Left cardiac atrium (tissue), 4 donors: ENCODE measurements at regions of chr3 and their contacts with region 1.

Region 1: GRCh38 chr3:156674046-156674910 is at the start of gene TIPARP:
- DNase-seq: peak; percentile 100
- ATAC-seq: peak; percentile 95 to 96
- total RNA-seq, gene TIPARP: 34.1 to 37.2 TPM

Region 2: GRCh38 chr3:156554842-156555687 is 119.2 kb before region 1 on chr3 and contains the start of gene SSR3:
- intact Hi-C with region 1: loop called (anchors 5 to 10 kb)
- DNase-seq: peak; percentile 100
- ATAC-seq: peak; percentile 100
- total RNA-seq, gene SSR3: 145 to 162 TPM

Region 3: GRCh38 chr3:156615592-156616173 is 58.6 kb before region 1 on chr3:
- intact Hi-C with region 1: loop called in 1 of 2 experiments (anchors 5 kb)
- DNase-seq: no peak
- ATAC-seq: peak; percentile 53 to 89

Region 4: DNA sequence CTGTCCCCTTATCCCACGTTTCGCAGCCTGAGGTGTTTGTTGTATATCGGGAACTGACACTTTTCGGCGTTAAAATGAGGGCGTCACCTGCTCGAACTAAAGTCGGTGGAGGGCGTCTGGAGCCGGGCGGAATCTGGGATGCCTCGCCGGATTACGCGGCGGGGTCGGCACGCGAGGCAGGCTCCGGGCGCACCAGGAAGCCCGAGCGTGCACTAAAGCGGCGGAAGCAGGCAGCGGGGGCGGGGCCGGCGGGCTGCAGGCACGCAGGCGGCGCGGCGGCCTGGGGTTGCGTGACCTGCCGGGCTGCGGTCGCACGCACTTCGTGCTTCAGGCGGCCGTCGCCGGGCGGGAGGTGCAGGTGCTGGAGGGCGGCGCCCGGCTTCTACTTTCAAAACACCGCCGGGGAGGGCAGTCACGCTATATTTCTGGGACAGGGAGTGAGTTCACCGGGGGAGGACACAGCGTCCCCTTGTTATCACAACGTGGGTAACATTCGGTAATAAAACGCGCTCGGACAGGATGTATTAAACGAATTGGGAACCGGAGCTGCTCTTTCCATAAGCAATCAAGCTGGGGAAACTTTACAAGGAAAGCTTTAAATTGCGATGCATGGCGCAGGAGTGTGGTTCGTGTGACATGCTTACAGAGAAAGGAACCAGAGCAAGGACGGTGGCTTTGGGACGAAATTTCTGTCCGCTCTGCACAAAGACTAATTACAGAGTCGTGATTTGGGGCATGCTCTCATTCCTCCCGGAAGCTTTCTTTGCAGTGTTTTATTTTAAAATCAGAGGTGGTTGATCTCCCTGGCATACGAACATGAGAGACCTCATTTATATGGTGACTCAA is 142.7 kb after region 1 on chr3:
- intact Hi-C with region 1: loop called (anchors 5 kb)
- DNase-seq: peak; percentile 90
- ATAC-seq: peak; percentile 95 to 97

Region 5: DNA sequence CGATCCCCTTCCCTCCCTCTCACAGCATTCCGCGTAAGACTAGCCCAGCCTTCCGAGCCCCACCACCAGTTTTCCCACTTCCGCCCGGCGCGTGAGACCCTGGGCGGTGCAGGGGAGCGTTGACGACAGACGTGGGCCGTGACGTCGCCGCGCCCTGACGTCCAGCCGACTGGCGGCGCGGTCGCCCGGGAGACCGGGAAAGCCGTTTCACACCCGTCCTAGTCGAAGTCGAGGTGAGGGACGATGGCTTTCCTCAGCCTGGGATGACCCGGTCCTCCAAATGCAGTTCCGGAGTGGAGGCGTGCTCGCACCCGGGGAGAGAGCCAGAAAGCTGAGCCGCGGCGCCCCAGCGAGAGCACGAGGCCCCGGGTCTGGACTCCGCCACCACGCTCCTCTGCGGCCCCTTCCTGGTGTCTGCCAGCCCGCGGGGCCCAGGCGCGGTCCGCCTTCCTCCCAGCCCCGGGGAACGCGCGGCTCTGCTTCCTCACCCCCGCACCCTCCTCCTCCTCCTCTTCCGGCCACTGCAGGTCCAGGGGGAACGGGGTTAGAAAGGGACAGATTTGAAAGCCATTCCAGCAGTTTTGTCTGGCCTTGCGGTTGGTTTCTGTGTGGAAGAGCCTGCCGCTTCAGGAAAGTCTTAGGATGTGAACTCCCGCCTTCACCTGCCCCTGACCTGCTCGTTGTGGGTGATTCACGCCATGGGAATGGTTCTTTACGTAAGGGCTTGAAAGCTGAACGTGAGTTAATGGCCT is 152.0 kb after region 1 on chr3 and contains the start of gene LEKR1:
- intact Hi-C with region 1: loop called in 1 of 2 experiments (anchors 5 kb)
- DNase-seq: peak; percentile 93
- ATAC-seq: peak; percentile 95 to 96
- total RNA-seq, gene LEKR1: 0.65 to 2.3 TPM

Region 6: DNA sequence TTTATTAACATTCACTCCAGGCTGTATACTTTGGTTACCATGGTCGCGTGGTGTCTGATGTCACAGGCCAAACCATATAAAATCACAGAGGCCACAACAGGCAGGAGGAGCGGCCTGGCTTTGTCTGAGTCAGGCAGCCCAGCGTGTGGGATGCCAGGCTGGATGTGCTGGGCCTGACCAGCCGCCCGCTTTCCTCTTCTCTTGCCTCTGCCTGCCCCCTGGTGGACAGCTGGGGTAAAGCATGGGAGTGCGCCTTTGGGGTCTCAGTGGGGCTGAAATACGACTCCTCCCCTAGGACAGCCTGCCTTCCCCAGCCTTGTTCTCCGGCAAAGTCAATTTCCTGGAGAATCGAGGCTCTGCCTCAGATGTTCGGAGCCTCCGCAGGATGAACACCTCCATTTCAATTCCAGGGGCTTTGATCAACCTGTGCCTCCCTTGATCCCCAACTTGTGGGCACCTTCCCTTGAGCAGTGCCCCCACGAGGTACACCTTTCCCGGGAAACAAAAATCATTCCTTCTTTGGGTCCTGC is 407.5 kb after region 1 on chr3:
- intact Hi-C with region 1: loop called (anchors 2 to 5 kb)
- DNase-seq: peak; percentile 93
- ATAC-seq: peak; percentile 81 to 93

Region 7: GRCh38 chr3:157130467-157131251 is 456.4 kb after region 1 on chr3:
- intact Hi-C with region 1: loop called in 1 of 2 experiments (anchors 2 kb)
- DNase-seq: peak; percentile 73
- ATAC-seq: peak; percentile 4 to 27